MCF 10A (cell line): ENCODE measurements at regions of chr5 and their contacts with region 1.

Region 1: GRCh38 chr5:149581192-149581861 is at the start of gene ARHGEF37:
- DNase-seq: peak; percentile 83
- H3K4me3 Mint-ChIP-seq: peak within 1 kb of the TSS; percentile 75
- H3K27ac Mint-ChIP-seq: peak within 1 kb of the TSS; percentile 76
- H3K4me1 Mint-ChIP-seq: peaks cover 26% of the 10 kb centered on the region
- H3K27me3 Mint-ChIP-seq: no peaks in the 10 kb centered on the region
- CTCF ChIP-seq: no peak
- total RNA-seq, gene ARHGEF37: 3.9 and 5.1 TPM in 2 replicates

Region 2: GRCh38 chr5:149317281-149318048 is 263.9 kb before region 1 on chr5:
- CTCF ChIA-PET with region 1: interaction called, 5 read pairs
- POLR2A ChIA-PET with region 1: interaction called, 14 read pairs
- intact Hi-C with region 1: no loop called
- DNase-seq: peak; percentile 71
- H3K4me3 Mint-ChIP-seq: no peak overlapping the region
- H3K27ac Mint-ChIP-seq: no peak overlapping the region
- H3K4me1 Mint-ChIP-seq: peaks cover 12% of the 10 kb centered on the region
- H3K27me3 Mint-ChIP-seq: no peaks in the 10 kb centered on the region
- CTCF ChIP-seq: peak; percentile 78

Region 3: GRCh38 chr5:149485655-149486425 is 95.5 kb before region 1 on chr5:
- CTCF ChIA-PET with region 1: no interaction called
- POLR2A ChIA-PET with region 1: interaction called, 10 read pairs
- intact Hi-C with region 1: no loop called
- DNase-seq: peak; percentile 97
- H3K4me3 Mint-ChIP-seq: no peak overlapping the region
- H3K27ac Mint-ChIP-seq: peak overlapping the region; percentile 98
- H3K4me1 Mint-ChIP-seq: peaks cover 57% of the 10 kb centered on the region
- H3K27me3 Mint-ChIP-seq: no peaks in the 10 kb centered on the region
- CTCF ChIP-seq: no peak

Region 4: DNA sequence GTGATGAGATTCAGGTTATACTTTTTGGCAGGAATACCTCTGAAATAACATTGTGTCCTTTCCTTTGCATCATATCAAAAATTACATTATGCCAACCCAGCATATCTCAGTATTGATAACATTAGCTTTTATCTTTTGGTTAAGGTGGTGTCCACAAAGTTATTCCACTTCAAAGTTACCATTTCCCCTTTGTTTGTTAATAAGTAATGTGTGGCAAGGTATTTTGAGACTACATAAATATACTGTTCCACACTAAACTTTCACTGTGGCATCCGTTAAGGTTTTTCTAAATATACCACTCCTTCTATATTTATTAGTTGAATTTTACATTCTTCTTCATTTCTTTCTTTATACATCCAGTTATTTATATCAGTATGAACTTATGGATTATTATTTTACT is 14.1 kb before region 1 on chr5:
- CTCF ChIA-PET with region 1: interaction called, 41 read pairs
- POLR2A ChIA-PET with region 1: interaction called, 85 read pairs
- intact Hi-C with region 1: no loop called
- DNase-seq: no peak
- H3K4me3 Mint-ChIP-seq: no peak overlapping the region
- H3K27ac Mint-ChIP-seq: no peak overlapping the region
- H3K4me1 Mint-ChIP-seq: peaks cover 20% of the 10 kb centered on the region
- H3K27me3 Mint-ChIP-seq: no peaks in the 10 kb centered on the region
- CTCF ChIP-seq: no peak

Region 5: GRCh38 chr5:149605998-149606724 is 24.8 kb after region 1 on chr5:
- CTCF ChIA-PET with region 1: interaction called, 17 read pairs
- POLR2A ChIA-PET with region 1: interaction called, 67 read pairs
- intact Hi-C with region 1: no loop called
- DNase-seq: peak; percentile 99
- H3K4me3 Mint-ChIP-seq: no peak overlapping the region
- H3K27ac Mint-ChIP-seq: peak overlapping the region; percentile 91
- H3K4me1 Mint-ChIP-seq: peaks cover 48% of the 10 kb centered on the region
- H3K27me3 Mint-ChIP-seq: no peaks in the 10 kb centered on the region
- CTCF ChIP-seq: no peak

Region 6: DNA sequence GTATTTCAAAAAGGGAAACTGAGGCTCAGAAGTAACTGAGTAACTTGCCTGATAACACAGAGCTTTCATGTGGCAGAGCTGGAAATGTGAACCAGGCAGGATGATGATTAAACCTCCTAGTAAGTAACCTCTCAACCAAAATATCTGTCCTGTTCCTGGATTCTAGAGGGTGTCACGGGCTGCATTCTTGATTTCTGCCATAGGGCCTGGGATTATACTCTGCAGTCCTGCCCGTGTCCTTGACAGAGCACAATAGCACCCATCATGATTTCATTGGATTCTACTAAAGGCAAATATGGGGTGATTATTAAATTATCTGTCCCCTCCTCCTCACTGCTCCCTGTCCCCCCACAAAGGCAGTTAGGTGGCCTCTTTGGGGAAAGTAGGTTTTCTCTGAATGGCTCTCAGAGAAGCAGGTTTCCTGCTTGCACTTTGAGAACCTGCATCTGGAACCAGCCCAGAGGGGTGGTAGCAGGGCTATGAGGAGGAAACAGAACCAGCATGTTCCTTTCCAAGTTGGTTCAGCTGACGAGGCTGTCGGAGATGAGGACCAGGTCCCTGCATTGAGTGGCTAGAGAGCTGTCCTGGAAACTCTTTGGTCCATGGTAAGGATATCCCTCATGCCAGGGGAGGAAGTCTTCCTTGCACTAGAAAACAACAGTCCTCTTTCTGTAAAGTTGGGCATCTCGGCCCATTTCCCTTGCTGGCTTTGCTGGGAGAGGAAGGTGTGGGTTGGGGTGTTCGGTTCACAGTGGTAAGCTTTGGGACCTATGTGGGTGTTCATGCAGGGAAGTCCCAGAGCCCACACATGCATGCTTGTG is 185.3 kb after region 1 on chr5:
- CTCF ChIA-PET with region 1: no interaction called
- POLR2A ChIA-PET with region 1: no interaction called
- intact Hi-C with region 1: no loop called
- DNase-seq: no peak
- H3K4me3 Mint-ChIP-seq: no peak overlapping the region
- H3K27ac Mint-ChIP-seq: no peak overlapping the region
- H3K4me1 Mint-ChIP-seq: peaks cover 4% of the 10 kb centered on the region
- H3K27me3 Mint-ChIP-seq: no peaks in the 10 kb centered on the region
- CTCF ChIP-seq: no peak

Region 7: GRCh38 chr5:150209020-150209635 is 627.8 kb after region 1 on chr5:
- CTCF ChIA-PET with region 1: no interaction called
- POLR2A ChIA-PET with region 1: no interaction called
- intact Hi-C with region 1: no loop called
- DNase-seq: peak; percentile 83
- H3K4me3 Mint-ChIP-seq: no peak overlapping the region
- H3K27ac Mint-ChIP-seq: peak overlapping the region; percentile 63
- H3K4me1 Mint-ChIP-seq: peaks cover 13% of the 10 kb centered on the region
- H3K27me3 Mint-ChIP-seq: no peaks in the 10 kb centered on the region
- CTCF ChIP-seq: no peak